HepG2 (cell line): ENCODE measurements at regions of chr13 and their contacts with region 1.

Region 1: DNA sequence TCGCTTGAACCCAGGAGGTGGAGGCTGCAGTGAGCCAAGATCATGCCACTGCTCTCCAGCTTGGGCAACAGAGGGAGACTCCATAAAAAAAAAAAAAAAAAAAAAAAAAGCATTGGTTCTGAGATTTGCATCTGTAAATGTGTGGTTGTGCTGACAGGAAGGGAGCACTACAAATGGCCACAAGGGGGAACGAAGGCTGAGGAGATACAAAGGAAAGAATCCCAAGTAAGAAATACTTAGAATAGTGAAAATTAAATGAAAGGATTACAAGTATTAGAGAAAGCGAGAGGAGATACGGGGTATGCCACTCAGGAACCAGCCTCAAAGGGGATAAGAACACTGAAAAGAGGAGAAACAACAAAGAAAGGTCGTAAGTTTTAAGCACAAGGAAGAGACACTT is 284.9 kb downstream of the KLF12 start:
- DNase-seq: peak; percentile 17
- ATAC-seq: peak; percentile 74
- H3K4me3 ChIP-seq: no peak overlapping the region
- H3K27ac ChIP-seq: no peak overlapping the region
- H3K4me1 ChIP-seq: no peaks in the 10 kb centered on the region
- H3K27me3 ChIP-seq: no peaks in the 10 kb centered on the region
- CTCF ChIP-seq: peak; percentile 28; the same call in 1 of the 2 replicates
- EP300 ChIP-seq: no peak
- POLR2A ChIP-seq: no peak
- RAD21 ChIP-seq: no peak

Region 2: DNA sequence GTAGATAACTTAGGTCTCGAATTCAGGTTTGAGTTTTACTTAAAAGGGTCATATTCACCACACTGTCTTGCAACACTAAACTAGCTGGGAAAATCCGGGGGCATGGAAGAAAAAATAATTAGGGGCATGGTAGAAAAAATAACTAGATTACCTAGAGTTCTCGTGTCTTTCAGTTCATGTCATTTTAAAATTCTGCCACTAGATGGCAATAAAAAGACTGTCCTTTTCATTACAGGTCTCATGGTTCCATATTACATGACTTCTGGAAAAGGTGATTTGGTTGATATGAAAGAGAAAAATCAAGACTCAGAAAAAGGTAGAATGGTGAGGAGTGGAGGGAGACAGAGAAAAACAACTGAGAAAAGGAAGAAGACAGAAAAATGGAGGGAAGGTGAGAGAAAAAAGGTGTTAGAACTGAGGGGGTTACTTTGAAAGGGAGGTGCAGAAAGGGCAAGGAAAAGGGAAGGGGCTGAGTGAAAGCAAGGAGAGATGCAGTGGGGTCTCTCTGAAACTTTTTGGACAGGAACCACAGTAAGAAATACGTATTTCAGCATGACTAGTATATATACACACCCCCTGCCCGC is 14.1 kb before region 1 on chr13:
- CTCF ChIA-PET with region 1: no interaction called
- POLR2A ChIA-PET with region 1: no interaction called
- in situ Hi-C with region 1: no loop called
- intact Hi-C with region 1: no loop called
- DNase-seq: peak; percentile 39
- ATAC-seq: peak; percentile 69
- H3K4me3 ChIP-seq: no peak overlapping the region
- H3K27ac ChIP-seq: no peak overlapping the region
- H3K4me1 ChIP-seq: no peaks in the 10 kb centered on the region
- H3K27me3 ChIP-seq: no peaks in the 10 kb centered on the region
- CTCF ChIP-seq: peak; percentile 63
- EP300 ChIP-seq: no peak
- POLR2A ChIP-seq: no peak
- RAD21 ChIP-seq: no peak

Region 3: DNA sequence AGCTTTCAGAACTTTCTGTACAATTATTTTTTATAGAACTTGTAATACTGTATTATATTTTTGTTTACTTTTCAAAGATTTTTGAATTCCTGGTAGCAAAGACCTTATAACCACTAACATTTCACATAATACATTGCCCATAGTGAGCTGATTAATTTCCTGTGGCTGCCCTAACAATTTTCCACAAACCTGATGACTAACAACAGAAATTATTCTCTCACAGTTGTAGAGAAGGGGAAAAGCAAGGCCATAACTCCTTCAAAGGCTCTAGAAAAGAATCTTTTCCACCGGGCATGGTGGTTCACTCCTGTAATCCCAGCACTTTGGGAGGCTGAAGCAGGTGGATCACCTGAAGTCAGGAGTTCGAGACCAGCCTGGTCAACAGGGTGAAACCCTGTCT is 265.8 kb after region 1 on chr13:
- CTCF ChIA-PET with region 1: no interaction called
- POLR2A ChIA-PET with region 1: no interaction called
- in situ Hi-C with region 1: no loop called
- intact Hi-C with region 1: no loop called
- DNase-seq: no peak
- ATAC-seq: no peak
- H3K4me3 ChIP-seq: no peak overlapping the region
- H3K27ac ChIP-seq: no peak overlapping the region
- H3K4me1 ChIP-seq: peaks cover 27% of the 10 kb centered on the region
- H3K27me3 ChIP-seq: no peaks in the 10 kb centered on the region
- CTCF ChIP-seq: no peak
- EP300 ChIP-seq: no peak
- POLR2A ChIP-seq: no peak
- RAD21 ChIP-seq: no peak

Region 4: DNA sequence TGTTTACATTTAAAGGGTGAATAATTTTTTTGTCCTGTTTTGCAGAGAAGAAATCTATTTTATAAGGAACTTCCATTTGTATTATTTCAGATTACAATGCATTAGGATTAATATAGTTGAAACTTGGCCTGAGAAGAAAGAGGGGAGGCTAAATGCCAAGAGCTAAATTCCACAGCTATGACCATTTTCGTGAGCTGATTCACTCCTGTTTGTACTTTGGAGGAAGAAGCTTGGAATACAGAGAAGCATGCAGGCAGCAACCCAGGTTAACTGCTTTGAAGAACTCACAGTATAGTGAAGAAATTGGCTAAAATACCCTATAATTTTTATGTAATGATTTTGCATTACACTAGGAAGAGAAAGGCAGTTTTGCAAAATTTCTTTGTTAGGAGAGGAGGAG is 594.3 kb after region 1 on chr13:
- CTCF ChIA-PET with region 1: no interaction called
- POLR2A ChIA-PET with region 1: no interaction called
- in situ Hi-C with region 1: no loop called
- intact Hi-C with region 1: no loop called
- DNase-seq: no peak
- ATAC-seq: no peak
- H3K4me3 ChIP-seq: no peak overlapping the region
- H3K27ac ChIP-seq: no peak overlapping the region
- H3K4me1 ChIP-seq: no peaks in the 10 kb centered on the region
- H3K27me3 ChIP-seq: no peaks in the 10 kb centered on the region
- CTCF ChIP-seq: no peak
- EP300 ChIP-seq: no peak
- POLR2A ChIP-seq: no peak
- RAD21 ChIP-seq: no peak

Region 5: DNA sequence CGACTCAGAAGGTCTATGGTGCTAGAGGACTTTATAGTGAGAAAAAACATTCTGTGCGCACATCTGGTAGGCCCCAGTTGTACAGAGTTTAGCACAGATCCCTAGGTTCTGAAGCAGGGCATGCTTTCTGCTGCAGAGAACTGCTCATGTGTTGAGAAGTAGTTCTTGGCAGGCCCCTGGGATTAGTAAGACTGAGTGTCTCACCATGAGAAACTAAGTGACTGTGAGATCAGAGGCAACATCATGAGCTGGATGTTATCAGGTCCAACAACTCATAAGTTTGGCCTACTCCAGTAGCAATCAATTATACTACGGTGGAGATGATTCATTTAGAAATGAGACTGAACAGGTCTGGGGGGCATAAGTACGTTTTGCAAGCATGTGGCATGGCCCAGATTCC is 792.3 kb after region 1 on chr13:
- CTCF ChIA-PET with region 1: no interaction called
- POLR2A ChIA-PET with region 1: no interaction called
- in situ Hi-C with region 1: no loop called
- intact Hi-C with region 1: loop called (anchors 10 kb)
- DNase-seq: no peak
- ATAC-seq: no peak
- H3K4me3 ChIP-seq: no peak overlapping the region
- H3K27ac ChIP-seq: no peak overlapping the region
- H3K4me1 ChIP-seq: no peaks in the 10 kb centered on the region
- H3K27me3 ChIP-seq: no peaks in the 10 kb centered on the region
- CTCF ChIP-seq: no peak
- EP300 ChIP-seq: no peak
- POLR2A ChIP-seq: no peak
- RAD21 ChIP-seq: no peak